Right ventricle myocardium superior (tissue), 1 donor: ENCODE measurements at regions of chr2 and their contacts with region 1.

Region 1: DNA sequence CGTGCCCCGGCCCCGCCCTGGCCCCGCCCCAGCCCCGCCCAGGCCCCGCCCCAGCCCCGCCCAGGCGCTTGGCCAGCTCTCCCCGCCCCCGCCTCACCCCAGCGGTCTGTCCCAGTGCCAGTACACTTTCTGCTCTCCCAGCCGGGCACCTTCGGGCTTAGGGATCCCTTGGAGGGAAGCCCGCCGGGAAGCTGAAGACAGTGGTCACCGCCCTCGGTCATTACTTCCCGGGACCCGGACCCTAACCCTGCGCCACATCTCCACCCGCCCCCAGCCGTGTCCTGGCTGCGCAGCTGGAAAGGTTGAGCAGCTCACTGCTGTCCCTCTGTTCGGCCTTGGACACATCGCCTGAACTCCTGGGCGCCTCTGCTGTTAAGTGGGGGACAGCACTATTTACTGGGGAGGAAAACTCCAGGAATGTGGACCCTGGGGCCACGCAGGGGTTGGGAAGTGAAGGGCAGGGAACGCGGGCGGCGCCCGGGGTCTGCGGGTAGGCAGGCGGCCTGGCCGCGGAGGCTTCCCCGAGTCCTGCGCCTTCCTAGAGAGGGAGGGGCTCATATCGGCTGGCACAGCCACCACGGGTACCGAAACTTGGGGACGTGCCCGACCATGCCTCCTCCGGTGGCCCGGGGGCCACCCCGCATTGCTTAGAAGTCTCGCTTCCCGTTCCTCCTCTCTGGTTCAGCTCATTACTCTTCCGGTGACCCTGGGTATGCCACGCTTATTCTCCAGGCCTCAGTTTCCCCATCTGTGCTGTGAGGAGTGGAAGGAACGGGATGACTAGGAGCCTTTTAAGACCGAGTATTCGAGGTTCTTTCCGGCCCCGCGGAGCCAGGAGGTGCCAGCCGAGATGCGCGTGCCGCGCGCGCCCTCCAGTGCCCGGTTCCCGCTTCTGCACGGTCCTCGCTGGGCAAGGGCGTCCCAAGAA is 121.0 kb downstream of the GYPC start:
- DNase-seq: peak; percentile 90
- ATAC-seq: peak; percentile 97

Region 2: DNA sequence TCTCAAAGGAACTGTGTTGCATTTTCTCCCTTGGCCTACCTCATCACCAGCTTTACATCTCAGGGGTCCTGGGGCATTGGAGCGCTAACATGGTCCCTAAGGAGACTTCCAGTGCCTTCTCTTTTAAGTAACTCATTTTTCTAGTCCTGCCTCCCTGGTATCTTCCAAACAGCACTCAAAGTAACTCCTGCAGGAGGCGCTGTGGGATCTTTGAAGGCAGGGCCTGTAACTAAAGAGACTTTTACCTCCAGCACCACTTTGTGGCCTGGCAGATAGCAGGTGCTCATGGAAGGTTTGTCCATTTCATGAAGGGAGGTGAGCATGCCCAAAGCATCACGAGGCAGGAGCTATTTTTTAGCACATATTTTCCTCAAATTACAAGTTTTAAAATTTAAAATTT is 532.0 kb before region 1 on chr2:
- intact Hi-C with region 1: loop called (anchors 5 kb)
- DNase-seq: peak; percentile 50
- ATAC-seq: no peak

Region 3: DNA sequence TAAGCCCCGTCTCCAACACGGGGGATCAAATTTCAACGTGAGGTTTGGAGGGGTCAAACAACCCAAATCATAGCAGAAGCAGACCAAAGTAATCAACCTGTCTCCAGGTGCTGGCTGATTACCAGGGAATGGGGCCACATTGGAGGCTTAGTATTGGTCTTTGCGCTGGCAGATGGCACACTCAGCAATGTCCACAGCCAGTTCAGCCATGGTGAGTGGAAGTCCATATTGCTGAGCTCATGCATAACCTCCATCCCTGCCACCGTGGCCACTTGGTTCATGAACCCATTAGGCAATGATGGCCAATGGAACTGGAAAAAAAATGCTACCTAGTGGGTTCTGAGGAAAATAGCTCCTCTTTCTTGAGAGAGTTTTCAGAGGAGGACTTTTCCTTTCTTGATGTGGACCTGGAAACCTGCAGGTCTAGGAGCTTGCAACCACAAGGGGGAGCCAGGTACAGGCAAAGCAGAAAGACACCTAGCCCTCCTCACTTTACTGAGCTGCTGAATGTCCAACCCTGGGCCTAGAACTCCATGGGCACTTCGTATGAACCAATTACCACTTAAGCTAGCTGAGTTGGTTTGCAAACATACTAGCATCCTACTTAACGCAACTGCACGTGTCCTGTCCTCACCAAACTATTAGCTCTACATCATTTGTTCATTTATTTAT is 249.0 kb before region 1 on chr2:
- intact Hi-C with region 1: loop called (anchors 2 kb)
- DNase-seq: peak; percentile 72
- ATAC-seq: peak; percentile 78

Region 4: DNA sequence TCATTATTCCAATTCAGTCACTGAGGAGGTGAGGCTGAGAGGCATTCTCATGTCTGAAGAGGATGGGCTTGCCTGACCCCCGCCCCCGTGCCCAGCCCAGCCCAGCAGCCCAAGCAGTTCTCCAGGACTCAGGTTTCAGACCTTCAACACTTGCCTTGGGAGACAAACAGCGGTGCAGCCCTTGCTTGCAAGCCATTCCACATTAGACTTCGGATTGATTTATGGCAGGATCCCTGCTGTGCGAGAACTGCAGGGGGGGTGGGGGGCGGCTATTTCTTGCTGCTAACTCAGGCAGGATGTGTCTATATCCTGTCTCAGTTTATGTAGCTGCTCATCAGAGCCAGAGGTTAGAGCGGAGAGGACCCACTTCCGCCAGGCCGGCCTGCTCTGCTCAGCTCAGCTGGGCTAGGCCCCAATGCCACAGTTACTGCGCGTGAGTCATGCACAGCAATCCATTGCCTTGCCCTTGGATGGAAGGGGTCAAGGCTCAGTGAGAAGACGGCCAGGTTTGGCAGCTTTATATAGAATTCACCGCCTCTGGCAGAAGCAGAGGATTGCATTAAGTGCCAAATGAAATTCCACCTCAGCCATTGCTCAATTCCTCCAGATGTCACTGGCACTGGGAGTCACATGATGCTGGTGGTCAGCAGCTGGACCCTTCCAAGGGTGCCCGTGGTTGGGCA is 119.2 kb before region 1 on chr2:
- intact Hi-C with region 1: loop called (anchors 10 kb)
- DNase-seq: peak; percentile 89
- ATAC-seq: peak; percentile 73